Left ventricle myocardium superior (tissue), 1 donor: ENCODE measurements at regions of chr18 and their contacts with region 1.

Region 1: GRCh38 chr18:48975649-48976204 is 25.0 kb upstream of the SMAD7 start:
- DNase-seq: peak; percentile 77
- ATAC-seq: peak; percentile 83

Region 2: GRCh38 chr18:49041435-49042245 is 65.9 kb after region 1 on chr18:
- intact Hi-C with region 1: loop called (anchors 10 kb)
- DNase-seq: peak; percentile 67
- ATAC-seq: peak; percentile 85